ENCODE measurements at regions of chr17 and their contacts with region 1.

Region 1: GRCh38 chr17:7239091-7240027 is at the start of gene PHF23:
- H3K4me3 ChIP-seq: peak within 1 kb of the TSS; percentile 90
- H3K27ac ChIP-seq: peak within 1 kb of the TSS; percentile 89
- H3K4me1 ChIP-seq: peaks cover 13% of the 10 kb centered on the region
- CTCF ChIP-seq: peak; percentile 30; the same call in 1 of the 2 replicates

Region 2: GRCh38 chr17:7072406-7072805 is 167.0 kb before region 1 on chr17:
- CTCF ChIA-PET with region 1: no interaction called
- POLR2A ChIA-PET with region 1: no interaction called
- H3K4me3 ChIP-seq: no peak overlapping the region
- H3K27ac ChIP-seq: no peak overlapping the region
- H3K4me1 ChIP-seq: no peaks in the 10 kb centered on the region
- CTCF ChIP-seq: no peak

Region 3: GRCh38 chr17:7191571-7192270 is 47.6 kb before region 1 on chr17:
- CTCF ChIA-PET with region 1: no interaction called
- POLR2A ChIA-PET with region 1: no interaction called
- H3K4me3 ChIP-seq: no peak overlapping the region
- H3K27ac ChIP-seq: no peak overlapping the region
- H3K4me1 ChIP-seq: no peaks in the 10 kb centered on the region
- CTCF ChIP-seq: no peak

Region 4: GRCh38 chr17:7204828-7205461 is 34.4 kb before region 1 on chr17:
- CTCF ChIA-PET with region 1: no interaction called
- POLR2A ChIA-PET with region 1: no interaction called
- H3K4me3 ChIP-seq: peak overlapping the region; percentile 41
- H3K27ac ChIP-seq: no peak overlapping the region
- H3K4me1 ChIP-seq: peaks cover 3% of the 10 kb centered on the region; the same call in 1 of the 2 replicates
- CTCF ChIP-seq: no peak

Region 5: DNA sequence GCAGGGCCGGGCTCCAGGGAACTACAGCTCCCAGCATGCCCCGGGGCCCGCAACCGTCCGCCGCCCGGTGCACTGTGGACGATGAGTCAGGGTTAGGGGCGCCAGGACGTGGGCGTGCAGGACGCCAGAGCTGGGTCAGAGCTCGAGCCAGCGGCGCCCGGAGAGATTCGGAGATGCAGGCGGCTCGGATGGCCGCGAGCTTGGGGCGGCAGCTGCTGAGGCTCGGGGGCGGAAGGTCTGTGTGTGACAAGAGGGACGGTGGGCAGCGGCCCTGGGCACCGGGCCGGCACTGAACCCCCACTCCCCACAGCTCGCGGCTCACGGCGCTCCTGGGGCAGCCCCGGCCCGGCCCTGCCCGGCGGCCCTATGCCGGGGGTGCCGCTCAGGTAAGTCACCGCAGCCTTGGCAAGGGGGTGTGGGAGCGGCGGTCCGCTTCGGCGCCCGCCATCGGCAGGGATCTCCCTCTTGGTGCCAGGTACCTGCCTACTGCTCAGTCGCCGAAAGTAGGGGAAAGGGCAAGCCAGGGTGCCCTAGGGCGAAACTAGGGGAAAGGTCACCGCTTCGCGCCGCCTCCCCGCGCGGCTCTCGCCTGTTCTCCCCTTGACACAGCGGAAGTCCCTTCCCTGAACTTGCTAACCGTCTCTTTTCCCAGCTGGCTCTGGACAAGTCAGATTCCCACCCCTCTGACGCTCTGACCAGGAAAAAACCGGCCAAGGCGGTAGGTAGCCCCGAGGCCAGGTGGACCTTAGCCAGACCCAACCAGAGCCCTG is 19.4 kb before region 1 on chr17 and contains the starts of genes ACADVL and DLG4:
- CTCF ChIA-PET with region 1: interaction called, 33 read pairs
- POLR2A ChIA-PET with region 1: interaction called, 284 read pairs
- H3K4me3 ChIP-seq: peak within 1 kb of the TSS; percentile 83
- H3K27ac ChIP-seq: peak within 1 kb of the TSS; percentile 83; the same call in 1 of the 2 replicates
- H3K4me1 ChIP-seq: peaks cover 7% of the 10 kb centered on the region
- CTCF ChIP-seq: no peak

Region 6: DNA sequence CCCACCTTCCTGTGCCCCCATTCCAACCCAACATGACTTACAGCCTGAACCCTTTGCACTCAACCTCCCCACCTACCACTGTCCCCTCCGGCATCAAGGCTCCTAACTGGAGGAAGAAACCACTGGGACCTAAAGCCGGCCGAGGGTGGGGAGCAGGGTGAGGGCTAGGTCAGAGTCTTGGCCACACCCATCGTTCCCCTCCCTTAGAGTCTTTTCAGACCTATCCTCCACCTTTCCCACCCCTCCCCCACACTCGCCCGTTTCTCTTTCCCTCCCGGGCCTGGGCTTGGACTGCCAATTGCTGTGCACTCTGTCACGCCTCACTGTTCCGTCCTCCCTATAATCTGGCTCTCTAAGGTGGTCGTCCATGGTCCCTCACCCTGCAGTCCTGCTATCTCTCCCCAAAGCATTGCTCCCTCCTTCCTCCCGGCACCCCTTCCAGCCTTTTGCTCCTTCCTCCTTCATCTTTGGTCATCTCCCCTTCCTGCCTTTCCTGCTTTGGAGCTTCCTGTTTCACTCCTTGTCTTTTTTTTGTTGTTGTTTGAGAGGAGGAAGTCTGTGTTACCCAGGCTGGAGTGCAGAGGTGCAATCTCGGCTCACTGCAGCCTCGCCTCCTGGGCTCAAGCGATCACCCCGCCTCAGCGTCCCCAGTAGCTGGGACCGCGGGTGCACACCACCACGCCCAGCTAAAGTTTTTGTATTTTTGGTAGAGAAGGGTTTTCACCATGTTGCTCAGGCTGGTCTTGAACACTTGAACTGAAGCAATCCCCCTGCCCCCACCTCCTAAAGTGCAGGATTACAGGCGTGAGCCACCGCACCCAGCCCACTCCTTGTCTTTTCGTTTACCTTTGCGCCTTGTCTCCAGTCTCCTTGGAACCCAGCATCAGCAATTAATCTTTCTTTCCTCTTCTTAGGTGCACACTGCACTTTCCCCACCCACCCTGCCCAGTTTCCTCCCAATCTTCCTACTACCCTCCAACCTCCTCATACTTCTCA is 24.0 kb after region 1 on chr17:
- CTCF ChIA-PET with region 1: interaction called, 4 read pairs
- POLR2A ChIA-PET with region 1: interaction called, 13 read pairs
- H3K4me3 ChIP-seq: peak overlapping the region; percentile 40
- H3K27ac ChIP-seq: peak overlapping the region; percentile 80
- H3K4me1 ChIP-seq: peaks cover 18% of the 10 kb centered on the region
- CTCF ChIP-seq: no peak

Measured in HEK293 (cell line).